ENCODE measurements at regions of chr18 and their contacts with region 1.

Region 1: DNA sequence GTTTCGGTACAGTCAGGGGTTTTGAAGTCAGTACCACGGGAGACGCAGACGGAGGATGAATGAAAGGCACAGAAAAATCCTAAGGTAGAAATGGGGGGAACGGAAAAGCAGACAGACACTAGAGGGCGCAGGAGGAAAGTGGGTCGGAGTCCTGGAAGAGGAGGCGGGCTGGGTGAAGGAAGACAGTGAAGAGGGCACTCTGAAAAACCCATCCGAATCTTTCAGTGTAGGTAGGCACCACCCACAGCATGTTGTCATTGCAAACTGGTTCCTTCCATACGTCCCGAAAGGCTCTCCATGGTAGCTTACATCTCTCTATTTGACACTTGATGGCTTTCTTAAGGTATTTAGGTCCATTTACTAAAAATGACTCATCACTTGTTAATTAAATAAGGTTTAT is 18.5 kb upstream of the ZNF236 start:
- DNase-seq: peak; percentile 82
- H3K4me3 Mint-ChIP-seq: no peak overlapping the region
- H3K27ac Mint-ChIP-seq: no peak overlapping the region
- H3K4me1 Mint-ChIP-seq: peaks cover 12% of the 10 kb centered on the region
- H3K27me3 Mint-ChIP-seq: peaks cover 30% of the 10 kb centered on the region

Region 2: GRCh38 chr18:76822510-76823160 is 18.8 kb after region 1 on chr18 and contains the start of gene ZNF236:
- CTCF ChIA-PET with region 1: interaction called, 41 read pairs
- DNase-seq: peak; percentile 69
- H3K4me3 Mint-ChIP-seq: peak within 1 kb of the TSS; percentile 90
- H3K27ac Mint-ChIP-seq: peak within 1 kb of the TSS; percentile 95
- H3K4me1 Mint-ChIP-seq: peaks cover 60% of the 10 kb centered on the region
- H3K27me3 Mint-ChIP-seq: no peaks in the 10 kb centered on the region

Region 3: GRCh38 chr18:76875390-76876325 is 71.8 kb after region 1 on chr18:
- CTCF ChIA-PET with region 1: interaction called, 13 read pairs
- DNase-seq: peak; percentile 61
- H3K4me3 Mint-ChIP-seq: no peak overlapping the region
- H3K27ac Mint-ChIP-seq: peak overlapping the region; percentile 74
- H3K4me1 Mint-ChIP-seq: peaks cover 13% of the 10 kb centered on the region
- H3K27me3 Mint-ChIP-seq: no peaks in the 10 kb centered on the region

Region 4: DNA sequence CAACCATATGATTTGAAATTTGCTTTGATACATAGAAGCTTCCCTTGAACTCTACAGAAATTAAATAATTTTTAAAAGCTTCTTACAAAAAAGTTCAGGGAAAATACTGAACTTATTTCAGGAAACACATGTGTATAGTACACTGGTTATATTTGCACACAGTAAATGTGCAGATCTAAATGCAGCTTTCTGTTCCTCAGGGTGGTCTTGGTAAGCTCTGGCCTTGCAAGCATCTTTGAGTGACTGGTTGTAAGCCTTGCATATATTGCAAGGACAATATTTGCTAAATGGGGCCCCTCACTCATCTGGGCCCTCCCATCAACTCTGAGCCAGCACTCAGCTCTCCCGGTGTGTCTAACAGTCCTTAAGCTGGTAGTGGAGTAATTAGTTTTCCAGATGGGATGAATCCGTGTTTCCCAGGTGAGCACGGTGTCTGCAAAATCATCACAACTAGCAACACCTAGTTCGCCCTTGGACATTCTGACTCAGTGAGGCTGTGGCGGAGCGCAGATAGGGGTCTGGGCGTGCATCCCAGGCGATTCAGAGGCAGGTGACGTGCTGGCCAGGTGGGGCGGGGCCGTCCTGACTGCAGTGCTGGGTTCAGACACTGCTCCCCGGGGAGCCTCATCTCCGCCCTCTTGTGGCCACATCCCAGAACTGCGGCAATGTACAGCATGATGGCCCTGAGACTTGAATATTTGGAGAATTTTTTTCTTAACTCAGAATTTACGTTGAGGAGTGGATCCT is 179.2 kb after region 1 on chr18:
- CTCF ChIA-PET with region 1: interaction called, 76 read pairs
- DNase-seq: peak; percentile 94
- H3K4me3 Mint-ChIP-seq: no peak overlapping the region
- H3K27ac Mint-ChIP-seq: no peak overlapping the region
- H3K4me1 Mint-ChIP-seq: peaks cover 6% of the 10 kb centered on the region
- H3K27me3 Mint-ChIP-seq: peaks cover 2% of the 10 kb centered on the region